ENCODE measurements at regions of chr6 and their contacts with region 1.

Region 1: DNA sequence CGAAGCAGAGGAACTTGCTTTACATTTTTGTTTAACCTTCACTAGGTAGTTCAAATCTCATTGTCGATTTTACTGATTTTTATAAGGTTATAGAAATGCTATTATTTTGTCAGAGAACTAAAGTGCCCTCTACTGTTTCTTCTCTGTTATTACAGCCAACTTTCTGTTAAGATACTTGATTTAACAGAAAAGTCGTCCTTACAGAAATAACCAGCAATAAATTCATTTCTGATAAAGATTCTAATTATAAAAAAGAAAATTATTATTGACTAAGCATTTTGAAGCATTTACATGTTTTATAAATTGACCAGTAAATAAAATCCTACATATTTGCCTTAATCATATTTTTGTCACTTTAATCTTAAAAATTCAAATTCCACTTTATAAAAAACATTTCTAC is 60.8 kb downstream of the OGFRL1 start:
- DNase-seq: no peak
- H3K4me3 Mint-ChIP-seq: no peak overlapping the region
- H3K27ac Mint-ChIP-seq: no peak overlapping the region
- H3K4me1 Mint-ChIP-seq: peaks cover 2% of the 10 kb centered on the region
- H3K27me3 Mint-ChIP-seq: peaks cover 2% of the 10 kb centered on the region

Region 2: DNA sequence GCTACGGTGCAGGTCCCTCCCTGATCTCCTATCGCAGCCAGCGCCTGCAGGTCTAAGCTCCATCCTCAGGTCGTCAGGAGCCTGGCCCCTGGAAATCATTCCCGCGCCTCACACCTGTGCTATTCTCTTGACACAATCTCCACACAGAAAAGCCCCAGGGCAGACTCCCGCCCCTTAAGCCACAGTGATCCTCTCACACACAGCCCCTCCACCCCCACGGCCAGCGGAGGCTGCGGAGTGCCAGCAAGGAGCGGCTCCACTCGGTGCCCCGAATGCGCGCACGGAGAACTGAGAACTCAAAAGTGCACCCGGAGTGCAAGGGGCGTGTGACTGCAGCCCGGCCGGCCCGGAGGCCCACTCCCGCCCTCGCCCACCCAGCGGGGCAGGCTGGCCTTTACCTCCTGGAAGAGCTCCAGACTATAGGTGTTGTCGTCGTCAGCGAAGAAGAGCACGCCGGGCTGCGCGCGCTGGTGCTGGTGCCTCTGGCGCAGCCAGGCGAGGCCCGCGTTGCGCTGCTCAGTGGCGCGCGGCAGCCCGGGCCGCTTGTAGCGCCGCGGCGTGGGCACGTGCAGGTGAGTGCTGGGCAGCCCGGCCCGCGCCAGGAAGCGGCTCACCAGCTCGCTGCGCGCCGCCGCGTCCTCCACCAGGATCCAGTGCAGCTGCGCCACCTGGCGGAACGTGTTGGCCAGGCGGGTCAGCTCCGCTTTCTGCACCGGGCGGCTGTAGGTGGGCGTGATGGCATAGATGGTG is 393.8 kb before region 1 on chr6:
- CTCF ChIA-PET with region 1: interaction called, 3 read pairs
- intact Hi-C with region 1: loop called (anchors 1 kb)
- DNase-seq: peak; percentile 93
- H3K4me3 Mint-ChIP-seq: peak overlapping the region; percentile 74
- H3K27ac Mint-ChIP-seq: no peak overlapping the region
- H3K4me1 Mint-ChIP-seq: peaks cover 4% of the 10 kb centered on the region
- H3K27me3 Mint-ChIP-seq: peaks cover 49% of the 10 kb centered on the region

Region 3: DNA sequence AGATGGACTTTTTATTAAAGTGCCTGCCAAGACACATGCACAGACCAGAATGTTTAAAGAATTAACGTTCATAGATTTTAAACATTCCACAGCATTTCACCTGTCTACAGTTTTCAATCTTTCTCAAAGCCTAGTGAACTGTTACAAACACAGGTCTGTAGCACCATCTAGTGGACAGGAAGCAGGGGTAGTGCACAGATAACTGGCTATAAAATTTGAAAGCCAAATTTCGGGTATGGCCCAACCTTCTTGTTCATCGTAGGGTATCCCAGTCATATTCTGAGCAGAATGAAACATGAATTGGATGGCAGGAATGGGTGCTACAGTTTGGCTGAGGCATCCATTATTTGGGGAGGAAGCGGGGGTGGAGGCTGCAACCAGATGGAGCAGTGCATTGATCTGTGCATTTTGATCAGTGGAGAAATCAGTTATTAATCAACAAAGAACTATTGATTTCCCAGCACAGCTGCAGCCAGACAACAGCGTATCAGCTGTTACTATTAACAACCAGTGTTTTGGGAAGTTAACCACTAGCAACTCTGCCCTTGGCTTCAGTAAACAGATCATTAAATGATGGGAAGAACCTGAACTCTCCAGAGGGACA is 336.4 kb before region 1 on chr6:
- CTCF ChIA-PET with region 1: no interaction called
- intact Hi-C with region 1: loop called (anchors 2 kb)
- DNase-seq: peak; percentile 17
- H3K4me3 Mint-ChIP-seq: no peak overlapping the region
- H3K27ac Mint-ChIP-seq: no peak overlapping the region
- H3K4me1 Mint-ChIP-seq: no peaks in the 10 kb centered on the region
- H3K27me3 Mint-ChIP-seq: peaks cover 11% of the 10 kb centered on the region

Region 4: GRCh38 chr6:71028236-71028876 is 321.0 kb before region 1 on chr6:
- CTCF ChIA-PET with region 1: no interaction called
- intact Hi-C with region 1: no loop called
- DNase-seq: no peak
- H3K4me3 Mint-ChIP-seq: no peak overlapping the region
- H3K27ac Mint-ChIP-seq: no peak overlapping the region
- H3K4me1 Mint-ChIP-seq: no peaks in the 10 kb centered on the region
- H3K27me3 Mint-ChIP-seq: peaks cover 5% of the 10 kb centered on the region

Region 5: GRCh38 chr6:71190809-71191208 is 158.6 kb before region 1 on chr6:
- CTCF ChIA-PET with region 1: interaction called, 10 read pairs
- intact Hi-C with region 1: loop called (anchors 1 kb)
- DNase-seq: no peak
- H3K4me3 Mint-ChIP-seq: no peak overlapping the region
- H3K27ac Mint-ChIP-seq: no peak overlapping the region
- H3K4me1 Mint-ChIP-seq: no peaks in the 10 kb centered on the region
- H3K27me3 Mint-ChIP-seq: peaks cover 4% of the 10 kb centered on the region

Region 6: DNA sequence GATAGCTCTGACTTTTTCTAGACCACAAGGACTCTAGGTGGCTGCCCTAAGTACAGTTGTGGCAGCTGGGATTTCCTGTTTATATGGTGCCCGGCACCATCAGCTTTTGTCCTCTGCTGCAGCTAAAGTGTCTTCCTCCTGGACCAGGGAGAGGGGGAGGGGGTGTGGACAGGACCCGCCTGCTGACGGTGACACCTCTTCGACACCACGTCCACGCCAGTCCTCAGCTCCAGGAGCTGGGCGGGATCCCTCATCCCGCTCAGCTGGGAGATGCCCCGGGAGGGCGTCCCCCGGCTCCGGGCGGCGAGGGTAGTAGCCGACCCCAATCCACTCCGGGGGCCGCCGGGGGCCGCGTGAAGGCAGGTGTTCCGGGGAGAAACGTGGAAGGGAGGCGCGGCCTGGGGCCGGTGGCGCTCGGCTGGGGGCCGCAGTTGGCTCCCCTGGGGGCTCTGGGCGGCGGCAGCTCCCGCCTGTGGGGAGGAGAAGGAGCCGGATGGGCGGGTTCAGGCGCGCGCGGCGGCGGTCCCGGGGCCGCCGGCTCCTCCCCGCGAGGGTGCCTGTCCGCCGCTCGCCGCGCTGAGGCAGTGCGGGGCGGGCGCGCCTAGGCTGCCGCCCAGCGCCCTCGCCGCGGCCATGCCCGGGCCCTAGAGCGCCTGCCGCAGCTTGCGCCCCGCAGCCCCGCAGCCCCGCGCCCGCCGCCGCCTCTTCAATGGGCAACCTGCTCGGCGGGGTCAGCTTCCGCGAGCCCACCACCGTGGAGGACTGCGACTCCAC is 61.0 kb before region 1 on chr6 and contains the start of gene OGFRL1:
- CTCF ChIA-PET with region 1: no interaction called
- intact Hi-C with region 1: loop called (anchors 2 kb)
- DNase-seq: peak; percentile 63
- H3K4me3 Mint-ChIP-seq: peak within 1 kb of the TSS; percentile 72
- H3K27ac Mint-ChIP-seq: peak within 1 kb of the TSS; percentile 31
- H3K4me1 Mint-ChIP-seq: peaks cover 22% of the 10 kb centered on the region
- H3K27me3 Mint-ChIP-seq: peaks cover 7% of the 10 kb centered on the region
- total RNA-seq, gene OGFRL1: 2.6 to 3.1 TPM

Region 7: GRCh38 chr6:71433441-71433840 is 84.0 kb after region 1 on chr6:
- CTCF ChIA-PET with region 1: no interaction called
- intact Hi-C with region 1: no loop called
- DNase-seq: no peak
- H3K4me3 Mint-ChIP-seq: no peak overlapping the region
- H3K27ac Mint-ChIP-seq: no peak overlapping the region
- H3K4me1 Mint-ChIP-seq: no peaks in the 10 kb centered on the region
- H3K27me3 Mint-ChIP-seq: peaks cover 13% of the 10 kb centered on the region

Region 8: GRCh38 chr6:71498643-71499042 is 149.2 kb after region 1 on chr6:
- CTCF ChIA-PET with region 1: no interaction called
- intact Hi-C with region 1: no loop called
- DNase-seq: no peak
- H3K4me3 Mint-ChIP-seq: no peak overlapping the region
- H3K27ac Mint-ChIP-seq: no peak overlapping the region
- H3K4me1 Mint-ChIP-seq: no peaks in the 10 kb centered on the region
- H3K27me3 Mint-ChIP-seq: peaks cover 2% of the 10 kb centered on the region